Activated CD8-positive, alpha-beta T cell treated with anti-CD3 and anti-CD28 coated beads for 36 hours (primary cell): ENCODE measurements at regions of chr1 and their contacts with region 1.

Region 1: GRCh38 chr1:224513787-224514209 is 79.2 kb upstream of the WDR26 start:
- DNase-seq: peak; percentile 91
- ATAC-seq: peak; percentile 99
- H3K4me3 Mint-ChIP-seq: no peak overlapping the region
- H3K27ac Mint-ChIP-seq: no peak overlapping the region
- H3K4me1 Mint-ChIP-seq: peaks cover 6% of the 10 kb centered on the region
- H3K27me3 Mint-ChIP-seq: no peaks in the 10 kb centered on the region
- CTCF ChIP-seq: peak; percentile 96

Region 2: GRCh38 chr1:224503161-224504118 is 10.4 kb before region 1 on chr1:
- CTCF ChIA-PET with region 1: interaction called, 41 read pairs
- POLR2A ChIA-PET with region 1: interaction called, 4 read pairs
- intact Hi-C with region 1: no loop called
- DNase-seq: peak; percentile 53
- ATAC-seq: peak; percentile 74
- H3K4me3 Mint-ChIP-seq: no peak overlapping the region
- H3K27ac Mint-ChIP-seq: no peak overlapping the region
- H3K4me1 Mint-ChIP-seq: peaks cover 37% of the 10 kb centered on the region
- H3K27me3 Mint-ChIP-seq: no peaks in the 10 kb centered on the region
- CTCF ChIP-seq: peak; percentile 14

Region 3: GRCh38 chr1:224542783-224543440 is 29.1 kb after region 1 on chr1:
- CTCF ChIA-PET with region 1: interaction called, 23 read pairs
- POLR2A ChIA-PET with region 1: no interaction called
- intact Hi-C with region 1: no loop called
- DNase-seq: peak; percentile 63
- ATAC-seq: peak; percentile 99
- H3K4me3 Mint-ChIP-seq: no peak overlapping the region
- H3K27ac Mint-ChIP-seq: peak overlapping the region; percentile 58
- H3K4me1 Mint-ChIP-seq: peaks cover 19% of the 10 kb centered on the region
- H3K27me3 Mint-ChIP-seq: peaks cover 6% of the 10 kb centered on the region
- CTCF ChIP-seq: no peak

Region 4: GRCh38 chr1:224623743-224624333 is 110.0 kb after region 1 on chr1:
- CTCF ChIA-PET with region 1: interaction called, 18 read pairs
- POLR2A ChIA-PET with region 1: no interaction called
- intact Hi-C with region 1: loop called (anchors 10 kb)
- DNase-seq: peak; percentile 94
- ATAC-seq: peak; percentile 91
- H3K4me3 Mint-ChIP-seq: peak overlapping the region; percentile 48
- H3K27ac Mint-ChIP-seq: peak overlapping the region; percentile 91
- H3K4me1 Mint-ChIP-seq: peaks cover 37% of the 10 kb centered on the region
- H3K27me3 Mint-ChIP-seq: peaks cover 32% of the 10 kb centered on the region
- CTCF ChIP-seq: no peak

Region 5: GRCh38 chr1:224650290-224650689 is 136.5 kb after region 1 on chr1:
- CTCF ChIA-PET with region 1: no interaction called
- POLR2A ChIA-PET with region 1: no interaction called
- intact Hi-C with region 1: no loop called
- DNase-seq: no peak
- ATAC-seq: no peak
- H3K4me3 Mint-ChIP-seq: no peak overlapping the region
- H3K27ac Mint-ChIP-seq: no peak overlapping the region
- H3K4me1 Mint-ChIP-seq: no peaks in the 10 kb centered on the region
- H3K27me3 Mint-ChIP-seq: no peaks in the 10 kb centered on the region
- CTCF ChIP-seq: no peak

Region 6: DNA sequence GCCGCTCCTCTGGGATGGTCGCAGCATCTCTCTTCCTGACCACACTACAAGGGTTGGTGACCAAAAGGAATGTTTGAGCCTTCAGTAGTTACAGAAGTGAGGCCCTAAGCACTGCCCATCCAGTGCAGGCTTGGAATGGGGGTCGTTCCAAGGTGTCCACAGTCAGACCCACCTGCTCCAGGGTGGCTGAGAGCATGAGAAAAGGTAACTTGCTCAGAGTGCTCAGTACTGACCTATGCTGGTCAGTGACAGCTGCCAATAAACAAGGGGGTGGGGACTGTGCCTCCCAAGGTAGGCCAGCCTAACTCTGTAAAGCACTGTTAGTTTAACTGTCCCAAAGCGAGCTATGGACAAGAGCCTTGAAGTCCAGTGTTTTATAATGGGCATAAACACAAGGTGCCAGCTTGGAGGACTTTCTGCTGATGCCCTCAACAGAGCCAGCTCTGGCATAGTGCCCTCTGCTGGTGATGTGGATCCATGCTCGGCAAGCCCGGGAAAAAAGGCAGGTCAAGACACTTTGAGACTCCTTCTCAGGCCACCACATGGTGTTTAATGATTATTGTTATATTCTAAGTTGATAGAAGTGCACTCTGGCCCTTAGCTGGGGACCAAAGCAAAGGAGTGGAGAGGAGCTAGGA is 337.5 kb after region 1 on chr1:
- CTCF ChIA-PET with region 1: interaction called, 58 read pairs
- POLR2A ChIA-PET with region 1: no interaction called
- intact Hi-C with region 1: loop called (anchors 5 kb)
- DNase-seq: peak; percentile 74
- ATAC-seq: peak; percentile 56
- H3K4me3 Mint-ChIP-seq: no peak overlapping the region
- H3K27ac Mint-ChIP-seq: no peak overlapping the region
- H3K4me1 Mint-ChIP-seq: no peaks in the 10 kb centered on the region
- H3K27me3 Mint-ChIP-seq: no peaks in the 10 kb centered on the region
- CTCF ChIP-seq: peak; percentile 78

Region 7: DNA sequence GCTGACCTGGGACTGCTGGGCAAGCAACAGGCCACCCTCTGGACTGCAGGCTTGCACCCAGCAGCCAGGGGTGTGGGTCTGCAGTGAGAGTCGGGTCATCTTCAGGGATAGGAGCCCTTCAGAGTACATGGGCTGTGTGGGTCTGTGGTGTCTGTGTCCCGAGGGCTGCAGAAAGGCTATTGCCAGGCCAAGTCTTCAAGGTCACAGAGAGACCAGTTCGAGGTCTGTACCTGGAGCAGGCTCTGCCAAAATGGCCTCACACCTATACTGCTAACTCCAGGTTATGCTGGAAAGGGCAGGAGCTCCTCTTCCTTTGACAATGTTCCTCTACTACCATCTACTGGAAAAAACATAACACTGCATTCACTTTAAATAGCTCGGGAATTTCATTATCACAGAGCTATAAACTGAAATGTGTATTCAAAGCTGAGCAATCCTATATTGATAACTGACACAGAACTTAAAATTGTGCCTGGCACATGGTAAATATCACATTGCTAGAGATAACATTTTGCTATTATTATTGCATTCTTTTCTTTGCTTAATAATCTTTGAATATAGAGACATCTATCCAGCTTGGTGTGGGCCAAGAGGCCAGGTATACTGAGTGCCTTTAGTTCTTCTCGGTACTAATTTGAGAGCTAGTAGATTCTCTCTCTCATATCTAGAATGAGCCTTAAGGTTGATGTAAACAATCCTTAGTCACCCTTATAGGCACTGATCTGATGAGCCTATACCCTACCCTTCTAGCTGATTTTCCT is 408.8 kb after region 1 on chr1:
- CTCF ChIA-PET with region 1: interaction called, 47 read pairs
- POLR2A ChIA-PET with region 1: interaction called, 3 read pairs
- intact Hi-C with region 1: loop called (anchors 5 kb)
- DNase-seq: no peak
- ATAC-seq: peak; percentile 77
- H3K4me3 Mint-ChIP-seq: no peak overlapping the region
- H3K27ac Mint-ChIP-seq: no peak overlapping the region
- H3K4me1 Mint-ChIP-seq: no peaks in the 10 kb centered on the region
- H3K27me3 Mint-ChIP-seq: peaks cover 10% of the 10 kb centered on the region
- CTCF ChIP-seq: peak; percentile 68